MCF 10A (cell line): ENCODE measurements at regions of chr9 and their contacts with region 1.

Region 1: DNA sequence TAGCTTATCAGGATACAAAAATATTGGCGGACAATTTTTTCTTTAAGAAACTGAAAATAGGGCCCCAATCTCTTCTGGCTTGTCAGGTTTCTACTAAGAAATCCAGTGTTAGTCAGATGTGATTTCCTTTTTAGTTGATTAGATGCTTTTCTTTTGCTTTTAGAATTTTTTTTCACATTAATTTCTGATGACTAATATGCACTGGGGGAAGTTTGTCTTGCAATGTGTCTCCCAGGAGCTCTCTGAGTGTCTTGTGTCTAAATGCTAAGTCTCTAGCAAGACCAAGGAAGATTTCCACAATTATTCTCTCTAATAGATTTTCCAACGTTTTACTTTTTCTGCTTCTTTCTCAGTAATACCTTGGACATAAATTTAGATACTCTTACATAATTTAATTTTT is 559.8 kb upstream of the TYRP1 start:
- DNase-seq: no peak
- H3K4me3 Mint-ChIP-seq: no peak overlapping the region
- H3K27ac Mint-ChIP-seq: no peak overlapping the region
- H3K4me1 Mint-ChIP-seq: no peaks in the 10 kb centered on the region
- H3K27me3 Mint-ChIP-seq: no peaks in the 10 kb centered on the region
- CTCF ChIP-seq: no peak

Region 2: DNA sequence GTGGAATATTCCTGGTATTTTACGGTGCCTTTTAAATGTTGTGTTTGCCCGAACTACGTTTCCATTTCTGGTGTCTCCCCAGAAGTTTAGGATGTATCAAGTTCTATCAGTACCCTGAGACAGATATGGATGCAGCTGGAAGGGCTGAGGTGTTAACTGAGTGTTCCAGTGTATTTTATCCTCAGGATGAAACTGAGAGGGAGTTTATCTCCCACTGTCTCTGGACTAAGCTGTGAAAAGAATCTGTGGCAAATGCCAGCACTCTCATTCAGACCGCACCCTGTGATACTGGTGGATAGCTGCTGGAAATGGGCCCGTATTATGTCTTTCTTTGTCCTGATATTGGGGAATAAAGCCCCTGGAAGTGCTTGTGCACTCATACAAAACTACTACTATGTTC is 327.4 kb before region 1 on chr9:
- CTCF ChIA-PET with region 1: no interaction called
- POLR2A ChIA-PET with region 1: no interaction called
- intact Hi-C with region 1: loop called (anchors 5 kb)
- DNase-seq: no peak
- H3K4me3 Mint-ChIP-seq: no peak overlapping the region
- H3K27ac Mint-ChIP-seq: no peak overlapping the region
- H3K4me1 Mint-ChIP-seq: no peaks in the 10 kb centered on the region
- H3K27me3 Mint-ChIP-seq: no peaks in the 10 kb centered on the region
- CTCF ChIP-seq: no peak

Region 3: GRCh38 chr9:12544700-12545099 is 411.3 kb after region 1 on chr9:
- CTCF ChIA-PET with region 1: no interaction called
- POLR2A ChIA-PET with region 1: no interaction called
- intact Hi-C with region 1: no loop called
- DNase-seq: no peak
- H3K4me3 Mint-ChIP-seq: no peak overlapping the region
- H3K27ac Mint-ChIP-seq: no peak overlapping the region
- H3K4me1 Mint-ChIP-seq: no peaks in the 10 kb centered on the region
- H3K27me3 Mint-ChIP-seq: peaks cover 100% of the 10 kb centered on the region
- CTCF ChIP-seq: no peak